ENCODE measurements at regions of chr2 and their contacts with region 1.

Region 1: DNA sequence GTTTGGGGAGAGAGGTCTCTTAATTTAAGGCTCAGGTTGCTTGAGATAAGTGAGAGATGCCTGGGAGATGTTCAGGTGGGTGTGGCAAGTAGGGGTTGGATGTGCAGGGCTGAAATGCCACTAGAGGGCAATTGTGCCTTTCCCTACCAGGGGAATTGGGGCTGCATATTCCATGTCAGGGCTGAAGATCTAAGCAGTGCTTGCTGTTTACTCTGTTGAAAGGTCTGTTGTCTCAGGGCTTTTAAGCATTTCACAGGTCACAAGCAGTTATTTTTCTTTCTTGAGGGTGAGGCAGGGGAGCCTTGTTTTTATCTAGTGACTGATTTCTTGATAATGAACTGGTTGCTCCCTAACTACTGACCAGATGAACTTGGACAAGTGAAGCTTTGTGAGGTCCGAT is 7.9 kb downstream of the CCDC85A start:
- DNase-seq: peak; percentile 81
- ATAC-seq: peak; percentile 95
- H3K4me3 ChIP-seq: no peak overlapping the region
- H3K27ac ChIP-seq: no peak overlapping the region
- H3K4me1 ChIP-seq: 0 out of 2 replicates have a peak, but pooled peaks cover 7% of the 10 kb centered on the region
- H3K27me3 ChIP-seq: peaks cover 82% of the 10 kb centered on the region
- CTCF ChIP-seq: peak; percentile 81

Region 2: GRCh38 chr2:55519938-55520885 is 671.5 kb before region 1 on chr2:
- CTCF ChIA-PET with region 1: no interaction called
- POLR2A ChIA-PET with region 1: no interaction called
- intact Hi-C with region 1: no loop called
- DNase-seq: peak; percentile 30
- ATAC-seq: peak; percentile 33
- H3K4me3 ChIP-seq: peak overlapping the region; percentile 92
- H3K27ac ChIP-seq: no peak overlapping the region
- H3K4me1 ChIP-seq: peaks cover 10% of the 10 kb centered on the region; the same call in 1 of the 2 replicates
- H3K27me3 ChIP-seq: no peaks in the 10 kb centered on the region
- CTCF ChIP-seq: no peak

Region 3: GRCh38 chr2:56288838-56289580 is 97.3 kb after region 1 on chr2:
- CTCF ChIA-PET with region 1: no interaction called
- POLR2A ChIA-PET with region 1: no interaction called
- intact Hi-C with region 1: loop called (anchors 5 kb)
- DNase-seq: peak; percentile 25
- ATAC-seq: no peak
- H3K4me3 ChIP-seq: no peak overlapping the region
- H3K27ac ChIP-seq: no peak overlapping the region
- H3K4me1 ChIP-seq: peaks cover 24% of the 10 kb centered on the region
- H3K27me3 ChIP-seq: no peaks in the 10 kb centered on the region
- CTCF ChIP-seq: 0 out of 2 replicates have a peak, but pooled peaks have one; percentile 31

Region 4: GRCh38 chr2:56522605-56523089 is 331.0 kb after region 1 on chr2:
- CTCF ChIA-PET with region 1: interaction called, 4 read pairs
- POLR2A ChIA-PET with region 1: no interaction called
- intact Hi-C with region 1: loop called (anchors 10 kb)
- DNase-seq: peak; percentile 88
- ATAC-seq: peak; percentile 87
- H3K4me3 ChIP-seq: 0 out of 2 replicates have a peak overlapping the region, but pooled peaks have one; percentile 2
- H3K27ac ChIP-seq: peak overlapping the region; percentile 86
- H3K4me1 ChIP-seq: peaks cover 31% of the 10 kb centered on the region
- H3K27me3 ChIP-seq: no peaks in the 10 kb centered on the region
- CTCF ChIP-seq: no peak

Region 5: DNA sequence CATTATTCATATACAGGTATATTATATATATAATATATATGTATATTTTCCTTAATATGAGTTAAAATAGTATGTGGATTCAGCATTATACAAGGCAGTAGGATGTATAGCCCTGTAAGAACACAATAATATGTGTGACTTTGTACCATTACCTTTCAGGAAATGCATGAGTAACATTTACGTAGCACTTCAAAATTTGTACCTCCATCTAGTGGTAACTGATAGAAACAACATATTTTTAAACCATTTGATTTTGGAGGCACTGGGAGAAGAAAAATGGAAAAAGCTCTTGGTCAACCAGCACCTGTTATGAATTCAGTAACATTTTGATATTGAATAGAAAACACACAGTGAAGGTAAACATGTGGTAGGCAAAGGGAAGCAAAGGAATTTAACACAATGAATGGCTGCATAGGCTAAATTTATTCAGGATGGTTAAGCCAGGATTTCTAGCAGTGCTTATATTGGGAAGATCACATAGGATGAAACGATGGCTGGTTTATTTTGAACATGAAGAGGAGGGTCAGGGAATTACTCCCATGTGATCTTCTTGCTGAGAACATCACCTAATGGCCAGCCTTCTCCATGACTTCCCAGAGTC is 557.6 kb after region 1 on chr2:
- CTCF ChIA-PET with region 1: interaction called, 3 read pairs
- POLR2A ChIA-PET with region 1: no interaction called
- intact Hi-C with region 1: loop called (anchors 2 kb)
- DNase-seq: peak; percentile 68
- ATAC-seq: peak; percentile 15; the same call in 1 of the 2 replicates
- H3K4me3 ChIP-seq: no peak overlapping the region
- H3K27ac ChIP-seq: no peak overlapping the region
- H3K4me1 ChIP-seq: no peaks in the 10 kb centered on the region
- H3K27me3 ChIP-seq: peaks cover 16% of the 10 kb centered on the region
- CTCF ChIP-seq: peak; percentile 68

Measured in PC-3 (cell line).